Posterior cingulate gyrus (tissue), 11 donors: ENCODE measurements at regions of chrX and their contacts with region 1.

Region 1: DNA sequence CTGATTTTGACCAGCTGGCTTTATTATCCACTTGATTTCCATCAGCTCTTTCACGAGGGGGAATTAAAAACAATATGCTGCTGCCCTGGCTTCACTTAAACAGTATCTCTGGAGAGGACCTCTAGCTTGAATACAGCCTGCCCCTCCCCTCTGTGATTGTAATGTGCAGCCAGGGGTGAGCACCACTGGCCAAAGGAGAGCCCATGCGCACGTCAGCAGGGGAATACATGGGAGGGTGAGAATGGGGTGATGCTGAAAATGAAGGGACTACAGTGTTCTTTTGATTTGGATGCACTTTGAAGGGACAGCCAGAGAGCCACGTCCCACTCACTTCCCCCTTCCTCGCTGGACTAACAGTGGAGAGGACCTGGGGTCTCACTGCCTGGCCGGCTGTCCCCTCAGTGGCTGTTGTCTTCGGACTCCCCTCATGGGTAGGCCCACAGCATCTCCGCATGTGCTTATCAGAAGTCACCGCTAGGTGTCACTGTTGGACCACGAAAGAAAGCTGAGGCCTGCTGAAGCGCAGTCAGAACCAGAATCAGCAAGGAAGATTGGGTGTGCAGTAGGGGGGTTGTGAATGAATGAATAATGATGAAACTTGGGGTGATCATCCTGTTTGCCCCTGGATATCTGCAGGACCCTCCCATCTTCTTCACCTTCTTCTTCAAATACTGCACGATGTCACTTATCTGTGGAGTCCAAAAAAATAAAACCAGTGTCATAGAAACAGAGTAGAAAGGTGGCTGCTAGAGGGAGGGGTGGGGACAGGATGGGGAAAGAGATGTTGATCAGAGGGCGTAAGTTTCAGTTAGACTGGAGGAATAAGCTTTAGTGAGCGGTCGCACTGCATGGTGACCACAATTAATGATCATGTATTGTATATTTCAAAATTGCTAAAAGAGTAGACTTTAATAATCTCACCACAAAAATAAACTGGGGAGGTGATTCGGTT is 32.8 kb downstream of the CLCN4 start:
- DNase-seq: peak; percentile 65 to 97 (median 80)

Region 2: GRCh38 chrX:9724713-9725112 is 464.9 kb before region 1 on chrX:
- intact Hi-C with region 1: no loop called
- DNase-seq: no peak

Region 3: GRCh38 chrX:10326578-10326977 is 137.0 kb after region 1 on chrX:
- intact Hi-C with region 1: loop called (anchors 2 kb)
- DNase-seq: peak in 1 of 10 donors; percentile 24

Region 4: GRCh38 chrX:10615931-10616775 is 426.6 kb after region 1 on chrX:
- intact Hi-C with region 1: loop called (anchors 5 kb)
- DNase-seq: peak in 6 of 10 donors; percentile 18 to 87 (median 34)

Region 5: GRCh38 chrX:10722851-10723250 is 533.3 kb after region 1 on chrX:
- intact Hi-C with region 1: loop called (anchors 2 kb)
- DNase-seq: peak in 4 of 10 donors; percentile 48 to 58 (median 54)

Region 6: DNA sequence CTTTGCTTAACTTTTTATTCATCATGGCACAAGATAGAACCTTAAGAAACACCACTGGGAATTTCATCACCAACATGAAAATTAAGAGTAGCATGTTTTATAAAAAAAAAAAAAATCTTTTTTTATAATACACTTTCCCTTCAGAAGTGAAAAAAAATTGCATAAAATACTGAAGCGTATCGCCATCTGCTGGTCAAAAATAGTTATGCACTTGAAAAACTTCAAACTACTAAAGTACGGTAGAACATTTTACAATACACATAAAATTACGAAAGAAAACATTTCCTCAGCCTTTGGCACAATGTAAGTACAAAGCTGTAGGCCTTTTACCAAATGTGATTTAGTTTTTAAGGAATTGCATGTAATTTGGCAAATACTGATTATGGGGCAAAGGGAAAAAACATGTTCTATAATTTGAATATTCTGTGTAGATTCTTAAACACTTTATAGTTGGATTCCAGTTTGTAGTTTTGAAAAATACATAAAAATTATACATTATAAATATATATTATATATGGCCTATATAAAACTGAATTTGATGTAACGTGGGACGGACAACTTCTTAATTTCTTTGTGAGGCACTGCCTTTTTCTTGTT is 948.0 kb after region 1 on chrX:
- intact Hi-C with region 1: loop called (anchors 5 kb)
- DNase-seq: no peak